ENCODE measurements at regions of chr15 and their contacts with region 1.

Region 1: DNA sequence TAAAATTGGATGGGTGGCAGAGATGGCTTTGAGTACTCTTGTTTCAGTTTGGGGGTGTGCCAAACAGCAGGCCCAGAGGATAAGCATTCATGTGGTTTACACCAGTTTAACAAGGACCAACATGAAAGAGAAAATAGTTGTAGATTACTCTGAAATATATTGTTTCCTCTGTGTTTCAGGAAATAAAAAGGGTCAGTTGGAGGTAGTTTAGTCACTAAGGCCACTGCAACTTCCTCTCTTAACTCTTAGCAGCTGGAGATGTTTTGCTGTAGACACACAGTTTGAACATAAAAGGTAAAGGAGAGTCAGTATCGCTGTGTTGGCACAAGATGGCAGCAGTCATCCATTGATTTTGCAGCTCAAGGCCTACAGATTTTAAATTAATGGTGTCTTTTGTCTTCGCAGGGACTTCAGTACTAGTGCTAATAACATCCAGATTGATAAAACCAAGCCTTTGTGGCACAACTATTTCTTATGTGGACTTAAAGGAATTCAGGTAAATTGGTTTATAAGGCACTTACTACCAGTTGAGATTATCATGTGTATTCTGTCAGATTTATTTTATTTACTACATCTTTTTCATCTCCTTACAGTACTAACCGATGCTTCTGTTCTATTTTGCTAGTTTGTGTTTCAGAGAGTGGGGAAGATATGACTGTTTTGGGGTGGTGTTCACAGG is 65.5 kb downstream of the GALK2 start:
- DNase-seq: peak; percentile 78
- H3K4me3 ChIP-seq: no peak overlapping the region
- H3K27ac ChIP-seq: peak overlapping the region; percentile 10 to 78 (median 68)
- H3K4me1 ChIP-seq: peaks cover 0 to 55% (median 45%) of the 10 kb centered on the region in 4 donors
- H3K27me3 ChIP-seq: no peaks in the 10 kb centered on the region
- CTCF ChIP-seq: peak; percentile 58 to 83 (median 66)
- EP300 ChIP-seq: no peak
- POLR2A ChIP-seq: no peak

Region 2: GRCh38 chr15:49901996-49902684 is 666.6 kb after region 1 on chr15:
- intact Hi-C with region 1: loop called (anchors 10 kb)
- DNase-seq: no peak
- H3K4me3 ChIP-seq: no peak overlapping the region
- H3K27ac ChIP-seq: peak overlapping the region; percentile 65 to 77 (median 73)
- H3K4me1 ChIP-seq: peaks cover 0 to 60% (median 50%) of the 10 kb centered on the region in 4 donors
- H3K27me3 ChIP-seq: no peaks in the 10 kb centered on the region
- CTCF ChIP-seq: peak in 1 of 4 experiments; percentile 17
- EP300 ChIP-seq: no peak
- POLR2A ChIP-seq: no peak

Region 3: DNA sequence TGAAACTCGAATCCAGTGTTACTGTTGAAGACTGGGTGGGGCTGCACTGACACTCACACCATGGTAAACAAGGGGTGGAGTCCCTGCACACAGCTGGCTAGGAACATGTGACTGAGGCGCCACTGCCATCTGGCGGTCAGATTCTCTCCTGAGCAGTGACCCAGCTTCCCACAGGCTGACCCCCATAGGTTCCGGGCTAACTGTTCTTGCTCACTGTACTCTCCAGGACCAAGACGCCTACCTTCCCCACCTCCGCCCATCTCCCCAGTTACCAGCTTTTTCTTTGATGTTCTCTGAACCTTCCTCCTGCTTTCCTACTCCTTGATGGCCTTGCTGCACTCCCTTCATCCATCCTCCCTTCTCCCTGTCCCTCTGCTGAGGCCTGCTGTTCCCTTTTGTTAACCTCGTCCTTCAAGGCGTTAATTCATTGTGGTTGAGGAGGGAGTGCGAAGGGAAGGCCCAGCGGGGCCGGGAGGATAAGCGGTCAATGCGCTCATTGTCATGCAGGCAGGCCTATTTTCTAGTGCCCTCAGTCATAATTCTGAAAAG is 768.3 kb after region 1 on chr15:
- intact Hi-C with region 1: loop called (anchors 5 kb)
- DNase-seq: peak; percentile 91
- H3K4me3 ChIP-seq: no peak overlapping the region
- H3K27ac ChIP-seq: peak overlapping the region in 3 of 4 donors; percentile 36 to 46 (median 37)
- H3K4me1 ChIP-seq: peaks cover 0 to 36% (median 24%) of the 10 kb centered on the region in 4 donors
- H3K27me3 ChIP-seq: no peaks in the 10 kb centered on the region
- CTCF ChIP-seq: peak; percentile 50 to 73 (median 58)
- EP300 ChIP-seq: no peak
- POLR2A ChIP-seq: no peak

Region 4: DNA sequence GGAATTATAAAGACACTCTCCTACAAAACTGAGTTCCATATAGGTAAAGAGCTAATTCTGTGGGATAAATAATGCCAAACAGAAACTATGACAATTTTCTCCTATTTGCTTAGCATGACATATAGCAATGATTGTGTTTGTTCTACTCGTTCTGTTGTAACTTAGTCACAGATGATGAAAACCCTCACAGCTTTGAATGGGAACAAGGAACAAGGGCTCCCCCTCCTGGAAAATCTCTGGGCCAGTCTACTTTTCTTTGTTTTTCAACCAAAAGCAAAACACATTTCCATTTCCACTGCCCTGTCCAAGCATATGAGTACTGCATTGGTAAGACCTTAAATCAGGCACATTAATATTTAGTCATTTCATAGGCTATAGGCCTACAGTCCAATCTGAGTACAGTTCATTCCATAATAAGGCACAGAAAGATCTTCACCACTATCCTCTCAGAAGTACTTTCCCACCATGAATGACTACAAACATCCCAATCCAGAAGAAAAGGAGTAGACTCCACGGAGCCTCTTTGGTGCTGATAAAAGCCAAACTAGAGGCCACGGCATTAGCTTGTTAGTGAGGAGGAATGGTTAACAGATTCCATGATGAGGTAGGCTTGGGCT is 816.3 kb after region 1 on chr15:
- intact Hi-C with region 1: loop called (anchors 5 kb)
- DNase-seq: peak; percentile 76
- H3K4me3 ChIP-seq: no peak overlapping the region
- H3K27ac ChIP-seq: peak overlapping the region in 1 of 4 donors; percentile 28
- H3K4me1 ChIP-seq: peaks cover 0 to 31% (median 15%) of the 10 kb centered on the region in 4 donors
- H3K27me3 ChIP-seq: no peaks in the 10 kb centered on the region
- CTCF ChIP-seq: peak; percentile 25 to 72 (median 48)
- EP300 ChIP-seq: no peak
- POLR2A ChIP-seq: no peak

Region 5: DNA sequence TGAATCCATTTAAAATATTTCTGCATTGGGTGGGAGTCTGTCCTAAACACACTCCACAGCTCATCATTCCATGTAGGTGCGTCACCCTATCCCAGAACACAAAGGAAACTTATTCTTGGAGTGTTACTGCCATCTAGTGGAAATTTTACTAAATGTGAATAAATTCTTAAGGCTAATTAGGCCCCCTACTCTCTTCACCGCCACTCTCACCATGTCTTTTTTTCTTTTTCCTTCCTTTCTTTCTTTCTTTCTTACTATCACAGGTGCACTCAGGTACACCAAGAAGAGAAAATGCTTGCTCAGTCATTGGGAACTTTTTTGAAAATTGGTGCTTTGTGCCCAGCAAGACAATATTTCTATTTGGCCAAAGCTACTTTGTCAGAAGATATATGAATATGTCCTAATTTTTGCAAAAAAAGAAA is 909.9 kb after region 1 on chr15:
- intact Hi-C with region 1: loop called (anchors 1 kb)
- DNase-seq: no peak
- H3K4me3 ChIP-seq: no peak overlapping the region
- H3K27ac ChIP-seq: no peak overlapping the region
- H3K4me1 ChIP-seq: peaks cover 0 to 15% (median 5%) of the 10 kb centered on the region in 4 donors
- H3K27me3 ChIP-seq: no peaks in the 10 kb centered on the region
- CTCF ChIP-seq: peak; percentile 43 to 62 (median 53)
- EP300 ChIP-seq: no peak
- POLR2A ChIP-seq: no peak